CD8-positive, alpha-beta T cell (primary cell): ENCODE measurements at regions of chr6 and their contacts with region 1.

Region 1: GRCh38 chr6:30717042-30717844 is at the start of gene MDC1:
- DNase-seq: peak; percentile 97 to 100 (median 98)
- ATAC-seq: peak; percentile 72
- H3K4me3 ChIP-seq: peak within 1 kb of the TSS; percentile 69 to 70
- H3K4me3 Mint-ChIP-seq: peak within 1 kb of the TSS; percentile 92
- H3K27ac ChIP-seq: peak within 1 kb of the TSS; percentile 83 to 90
- H3K27ac Mint-ChIP-seq: peak within 1 kb of the TSS; percentile 99
- H3K4me1 ChIP-seq: peaks cover 23% of the 10 kb centered on the region
- H3K4me1 Mint-ChIP-seq: peaks cover 51% of the 10 kb centered on the region
- H3K27me3 ChIP-seq: no peaks in the 10 kb centered on the region
- H3K27me3 Mint-ChIP-seq: no peaks in the 10 kb centered on the region
- CTCF ChIP-seq: peak; percentile 47
- total RNA-seq, gene MDC1: 38.9 to 48.8 TPM

Region 2: GRCh38 chr6:29617782-29618557 is 1099.3 kb before region 1 on chr6:
- CTCF ChIA-PET with region 1: no interaction called
- POLR2A ChIA-PET with region 1: no interaction called
- intact Hi-C with region 1: no loop called
- DNase-seq: peak in 1 of 9 experiments; percentile 19
- ATAC-seq: no peak
- H3K4me3 ChIP-seq: no peak overlapping the region
- H3K4me3 Mint-ChIP-seq: no peak overlapping the region
- H3K27ac ChIP-seq: no peak overlapping the region
- H3K27ac Mint-ChIP-seq: no peak overlapping the region
- H3K4me1 ChIP-seq: no peaks in the 10 kb centered on the region
- H3K4me1 Mint-ChIP-seq: no peaks in the 10 kb centered on the region
- H3K27me3 ChIP-seq: no peaks in the 10 kb centered on the region
- H3K27me3 Mint-ChIP-seq: no peaks in the 10 kb centered on the region
- CTCF ChIP-seq: no peak

Region 3: DNA sequence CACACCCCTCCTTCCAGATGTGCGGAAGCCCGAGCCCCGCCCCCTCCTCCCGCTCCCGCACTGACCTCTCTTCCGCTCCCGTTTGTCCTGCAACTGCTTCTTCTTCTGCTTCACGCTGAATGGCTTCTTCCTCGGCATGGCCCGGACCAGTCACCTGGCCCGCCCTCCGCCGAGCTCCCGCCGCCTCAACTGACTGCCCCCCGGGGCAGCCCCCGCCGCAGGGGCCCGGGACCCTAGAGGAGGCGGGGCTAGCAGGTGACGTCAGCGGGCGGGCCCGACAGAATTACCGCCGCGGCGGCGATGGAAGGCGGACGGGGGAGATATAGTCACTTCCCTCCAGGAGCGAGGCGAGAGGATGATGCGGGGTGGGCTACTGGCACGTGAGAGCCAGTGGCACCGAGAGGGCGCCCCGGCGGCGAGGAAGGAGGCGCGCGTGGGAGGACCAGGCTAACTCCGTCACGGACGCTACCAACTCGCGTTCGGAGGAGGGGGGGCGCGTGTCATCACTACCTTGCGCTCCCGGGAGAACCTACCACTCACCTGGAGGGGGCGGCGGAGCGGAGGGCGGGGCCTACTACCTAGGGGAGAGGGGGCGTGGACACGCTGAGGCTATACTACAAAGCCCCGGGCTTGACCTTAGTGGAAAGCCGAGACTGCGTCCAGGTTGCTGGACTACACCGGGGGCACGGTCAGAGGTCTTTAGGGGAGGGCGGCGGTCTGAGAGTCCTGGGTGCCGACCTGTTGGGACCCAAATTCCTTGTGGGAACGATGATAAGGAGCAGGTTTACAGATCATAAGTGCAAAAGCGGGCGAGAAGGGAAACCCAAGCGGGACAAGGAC is 161.0 kb before region 1 on chr6 and contains the start of gene GNL1:
- CTCF ChIA-PET with region 1: interaction called, 3 read pairs
- POLR2A ChIA-PET with region 1: interaction called, 5 read pairs
- intact Hi-C with region 1: loop called (anchors 1 kb)
- DNase-seq: peak; percentile 97 to 100 (median 99)
- ATAC-seq: peak; percentile 90
- H3K4me3 ChIP-seq: peak within 1 kb of the TSS; percentile 75 to 92
- H3K4me3 Mint-ChIP-seq: peak within 1 kb of the TSS; percentile 95
- H3K27ac ChIP-seq: peak within 1 kb of the TSS; percentile 98 to 99
- H3K27ac Mint-ChIP-seq: peak within 1 kb of the TSS; percentile 99
- H3K4me1 ChIP-seq: peaks cover 25% of the 10 kb centered on the region
- H3K4me1 Mint-ChIP-seq: peaks cover 42% of the 10 kb centered on the region
- H3K27me3 ChIP-seq: no peaks in the 10 kb centered on the region
- H3K27me3 Mint-ChIP-seq: no peaks in the 10 kb centered on the region
- CTCF ChIP-seq: no peak
- total RNA-seq, gene GNL1: 148 to 159 TPM

Region 4: GRCh38 chr6:30626484-30627366 is 90.5 kb before region 1 on chr6 and contains the start of gene ATAT1:
- CTCF ChIA-PET with region 1: interaction called, 11 read pairs
- POLR2A ChIA-PET with region 1: no interaction called
- intact Hi-C with region 1: no loop called
- DNase-seq: peak; percentile 78 to 95 (median 92)
- ATAC-seq: peak; percentile 99
- H3K4me3 ChIP-seq: peak within 1 kb of the TSS; percentile 68 to 78
- H3K4me3 Mint-ChIP-seq: peak within 1 kb of the TSS; percentile 89
- H3K27ac ChIP-seq: peak within 1 kb of the TSS; percentile 85 to 94
- H3K27ac Mint-ChIP-seq: peak within 1 kb of the TSS; percentile 97
- H3K4me1 ChIP-seq: peaks cover 16% of the 10 kb centered on the region
- H3K4me1 Mint-ChIP-seq: peaks cover 29% of the 10 kb centered on the region
- H3K27me3 ChIP-seq: no peaks in the 10 kb centered on the region
- H3K27me3 Mint-ChIP-seq: no peaks in the 10 kb centered on the region
- CTCF ChIP-seq: peak; percentile 61
- total RNA-seq, gene ATAT1: 4.2 to 6.8 TPM

Region 5: DNA sequence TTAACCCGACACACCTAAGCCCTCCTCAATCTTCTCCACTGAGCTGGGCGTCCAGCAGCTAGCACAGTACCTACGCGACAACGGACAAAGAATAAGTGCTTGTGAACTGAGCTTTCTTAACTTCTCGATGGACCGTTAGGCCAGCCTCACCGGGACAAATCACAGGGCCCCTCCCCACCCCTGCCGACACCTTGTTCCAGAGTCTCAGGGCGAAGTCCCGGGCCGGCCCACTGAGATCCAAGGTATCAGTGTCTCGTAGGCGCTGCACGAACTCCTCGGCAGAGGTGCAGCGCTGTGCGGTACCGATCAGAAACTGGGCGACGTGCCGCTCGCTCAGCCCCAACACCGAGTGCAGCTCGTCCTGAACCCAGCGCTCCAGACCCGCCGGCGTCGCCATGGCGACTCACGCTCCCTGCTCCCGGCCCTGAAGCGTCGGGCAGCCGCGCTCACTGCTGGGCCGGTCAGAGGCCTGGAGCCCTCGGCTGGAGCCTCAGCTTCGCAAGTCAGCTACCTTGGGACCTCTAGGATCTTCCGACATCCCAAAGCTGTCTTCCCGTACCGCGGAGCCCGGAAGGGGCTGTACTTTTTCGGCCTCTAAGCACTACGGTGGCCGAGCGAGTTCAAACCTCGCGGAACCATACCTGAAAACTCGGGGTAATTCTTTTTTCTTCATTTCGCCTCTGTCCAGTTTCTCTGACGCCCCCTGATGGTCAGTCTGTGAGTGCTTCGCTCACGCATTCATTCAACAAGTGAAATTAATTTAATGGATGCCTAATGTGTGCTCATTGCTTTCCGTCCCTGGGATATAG is 44.6 kb before region 1 on chr6 and contains the start of gene DHX16:
- CTCF ChIA-PET with region 1: interaction called, 879 read pairs
- POLR2A ChIA-PET with region 1: interaction called, 324 read pairs
- intact Hi-C with region 1: no loop called
- DNase-seq: peak; percentile 77 to 96 (median 90)
- ATAC-seq: peak; percentile 79
- H3K4me3 ChIP-seq: peak within 1 kb of the TSS; percentile 69 to 81
- H3K4me3 Mint-ChIP-seq: peak within 1 kb of the TSS; percentile 90
- H3K27ac ChIP-seq: peak within 1 kb of the TSS; percentile 51 to 71
- H3K27ac Mint-ChIP-seq: peak within 1 kb of the TSS; percentile 82
- H3K4me1 ChIP-seq: peaks cover 15% of the 10 kb centered on the region
- H3K4me1 Mint-ChIP-seq: peaks cover 38% of the 10 kb centered on the region
- H3K27me3 ChIP-seq: no peaks in the 10 kb centered on the region
- H3K27me3 Mint-ChIP-seq: no peaks in the 10 kb centered on the region
- CTCF ChIP-seq: peak; percentile 38
- total RNA-seq, gene DHX16: 15.8 to 17.9 TPM

Region 6: DNA sequence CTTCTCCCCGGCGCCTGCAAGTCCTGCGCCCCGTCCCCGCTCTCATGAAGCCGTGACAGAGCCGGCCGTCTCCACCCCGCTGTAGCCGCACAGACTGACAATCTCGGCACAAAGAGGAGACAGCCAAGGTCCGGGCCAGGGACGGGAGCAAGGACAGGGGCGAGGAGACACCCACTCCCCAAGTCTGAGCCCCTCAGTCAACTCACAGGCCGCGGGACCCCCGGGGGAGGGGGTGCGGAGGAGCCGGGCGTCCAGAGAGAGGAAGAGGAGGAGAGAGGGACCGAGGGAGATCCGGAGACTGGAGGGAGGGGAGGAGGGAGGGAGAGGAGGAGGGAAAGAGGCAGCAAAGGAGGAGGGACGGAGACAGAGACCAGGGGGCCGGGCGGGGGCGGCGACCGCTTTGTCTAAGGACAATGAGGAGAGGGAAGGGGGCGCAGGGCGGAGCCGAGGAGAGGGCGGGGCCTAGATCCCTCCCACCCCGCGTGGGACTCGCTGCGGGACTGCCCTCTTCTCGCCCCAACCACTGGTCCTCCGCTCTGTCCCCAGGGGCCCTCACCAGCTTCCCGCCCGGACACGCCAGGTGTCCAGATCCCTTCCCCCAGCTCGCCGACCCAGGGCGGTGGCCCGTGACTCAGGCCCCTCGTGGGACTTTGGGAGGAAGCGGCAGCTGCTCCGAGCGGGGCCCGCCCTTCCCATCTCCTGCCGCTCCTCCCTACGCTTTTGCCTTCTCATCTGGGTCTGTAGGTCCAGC is 30.2 kb before region 1 on chr6:
- CTCF ChIA-PET with region 1: interaction called, 879 read pairs
- POLR2A ChIA-PET with region 1: interaction called, 324 read pairs
- intact Hi-C with region 1: loop called (anchors 1 kb)
- DNase-seq: peak in 8 of 9 experiments; percentile 47 to 79 (median 68)
- ATAC-seq: peak; percentile 21
- H3K4me3 ChIP-seq: peak overlapping the region; percentile 86 to 95
- H3K4me3 Mint-ChIP-seq: peak overlapping the region; percentile 99
- H3K27ac ChIP-seq: peak overlapping the region; percentile 75 to 94
- H3K27ac Mint-ChIP-seq: peak overlapping the region; percentile 95
- H3K4me1 ChIP-seq: peaks cover 31% of the 10 kb centered on the region
- H3K4me1 Mint-ChIP-seq: peaks cover 54% of the 10 kb centered on the region
- H3K27me3 ChIP-seq: no peaks in the 10 kb centered on the region
- H3K27me3 Mint-ChIP-seq: no peaks in the 10 kb centered on the region
- CTCF ChIP-seq: no peak

Region 7: GRCh38 chr6:30730601-30731435 is 13.6 kb after region 1 on chr6:
- CTCF ChIA-PET with region 1: interaction called, 121 read pairs
- POLR2A ChIA-PET with region 1: interaction called, 7 read pairs
- intact Hi-C with region 1: loop called in 1 of 2 experiments (anchors 1 kb)
- DNase-seq: peak; percentile 67 to 91 (median 85)
- ATAC-seq: peak; percentile 98
- H3K4me3 ChIP-seq: peak overlapping the region in 1 of 2 experiments; percentile 21
- H3K4me3 Mint-ChIP-seq: peak overlapping the region; percentile 47
- H3K27ac ChIP-seq: no peak overlapping the region
- H3K27ac Mint-ChIP-seq: no peak overlapping the region
- H3K4me1 ChIP-seq: peaks cover 29% of the 10 kb centered on the region
- H3K4me1 Mint-ChIP-seq: peaks cover 37% of the 10 kb centered on the region
- H3K27me3 ChIP-seq: no peaks in the 10 kb centered on the region
- H3K27me3 Mint-ChIP-seq: no peaks in the 10 kb centered on the region
- CTCF ChIP-seq: peak; percentile 67

Region 8: GRCh38 chr6:31129111-31129510 is 411.9 kb after region 1 on chr6:
- CTCF ChIA-PET with region 1: no interaction called
- POLR2A ChIA-PET with region 1: no interaction called
- intact Hi-C with region 1: no loop called
- DNase-seq: no peak
- ATAC-seq: no peak
- H3K4me3 ChIP-seq: no peak overlapping the region
- H3K4me3 Mint-ChIP-seq: no peak overlapping the region
- H3K27ac ChIP-seq: no peak overlapping the region
- H3K27ac Mint-ChIP-seq: no peak overlapping the region
- H3K4me1 ChIP-seq: no peaks in the 10 kb centered on the region
- H3K4me1 Mint-ChIP-seq: peaks cover 8% of the 10 kb centered on the region
- H3K27me3 ChIP-seq: no peaks in the 10 kb centered on the region
- H3K27me3 Mint-ChIP-seq: peaks cover 6% of the 10 kb centered on the region
- CTCF ChIP-seq: no peak